CD8-positive, alpha-beta T cell (primary cell): ENCODE measurements at regions of chr4 and their contacts with region 1.

Region 1: GRCh38 chr4:32226204-32226603 is 1506.0 kb downstream of the PCDH7 start:
- DNase-seq: no peak
- ATAC-seq: no peak
- H3K4me3 ChIP-seq: no peak overlapping the region
- H3K4me3 Mint-ChIP-seq: no peak overlapping the region
- H3K27ac ChIP-seq: no peak overlapping the region
- H3K27ac Mint-ChIP-seq: no peak overlapping the region
- H3K4me1 ChIP-seq: no peaks in the 10 kb centered on the region
- H3K4me1 Mint-ChIP-seq: no peaks in the 10 kb centered on the region
- H3K27me3 ChIP-seq: no peaks in the 10 kb centered on the region
- H3K27me3 Mint-ChIP-seq: no peaks in the 10 kb centered on the region
- CTCF ChIP-seq: no peak

Region 2: DNA sequence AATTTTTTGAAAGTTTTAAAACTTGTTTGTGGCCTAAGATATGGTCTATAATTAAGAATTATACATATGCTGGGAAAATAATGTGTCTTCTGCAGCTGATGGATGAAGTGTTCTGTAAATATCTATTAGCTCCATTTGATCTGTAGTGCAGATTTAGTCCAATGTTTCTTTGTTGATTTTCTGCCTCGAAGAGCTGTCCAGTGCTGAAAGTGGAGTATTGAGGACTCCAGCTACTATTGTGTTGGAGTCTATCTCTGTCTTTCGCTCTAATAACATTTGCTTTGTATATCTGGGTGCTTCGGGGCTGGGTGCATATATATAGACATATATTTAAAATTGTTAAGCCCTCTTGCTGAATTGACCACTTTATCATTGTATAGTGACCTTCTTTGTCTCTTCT is 621.3 kb after region 1 on chr4:
- CTCF ChIA-PET with region 1: no interaction called
- POLR2A ChIA-PET with region 1: no interaction called
- intact Hi-C with region 1: no loop called
- DNase-seq: no peak
- ATAC-seq: no peak
- H3K4me3 ChIP-seq: no peak overlapping the region
- H3K4me3 Mint-ChIP-seq: no peak overlapping the region
- H3K27ac ChIP-seq: no peak overlapping the region
- H3K27ac Mint-ChIP-seq: no peak overlapping the region
- H3K4me1 ChIP-seq: no peaks in the 10 kb centered on the region
- H3K4me1 Mint-ChIP-seq: no peaks in the 10 kb centered on the region
- H3K27me3 ChIP-seq: no peaks in the 10 kb centered on the region
- H3K27me3 Mint-ChIP-seq: no peaks in the 10 kb centered on the region
- CTCF ChIP-seq: no peak

Region 3: GRCh38 chr4:33116871-33117270 is 890.7 kb after region 1 on chr4:
- CTCF ChIA-PET with region 1: no interaction called
- POLR2A ChIA-PET with region 1: no interaction called
- intact Hi-C with region 1: loop called in 1 of 2 experiments (anchors 5 kb)
- DNase-seq: no peak
- ATAC-seq: no peak
- H3K4me3 ChIP-seq: no peak overlapping the region
- H3K4me3 Mint-ChIP-seq: no peak overlapping the region
- H3K27ac ChIP-seq: no peak overlapping the region
- H3K27ac Mint-ChIP-seq: no peak overlapping the region
- H3K4me1 ChIP-seq: no peaks in the 10 kb centered on the region
- H3K4me1 Mint-ChIP-seq: no peaks in the 10 kb centered on the region
- H3K27me3 ChIP-seq: no peaks in the 10 kb centered on the region
- H3K27me3 Mint-ChIP-seq: no peaks in the 10 kb centered on the region
- CTCF ChIP-seq: no peak